ENCODE measurements at regions of chr16 and their contacts with region 1.

Region 1: DNA sequence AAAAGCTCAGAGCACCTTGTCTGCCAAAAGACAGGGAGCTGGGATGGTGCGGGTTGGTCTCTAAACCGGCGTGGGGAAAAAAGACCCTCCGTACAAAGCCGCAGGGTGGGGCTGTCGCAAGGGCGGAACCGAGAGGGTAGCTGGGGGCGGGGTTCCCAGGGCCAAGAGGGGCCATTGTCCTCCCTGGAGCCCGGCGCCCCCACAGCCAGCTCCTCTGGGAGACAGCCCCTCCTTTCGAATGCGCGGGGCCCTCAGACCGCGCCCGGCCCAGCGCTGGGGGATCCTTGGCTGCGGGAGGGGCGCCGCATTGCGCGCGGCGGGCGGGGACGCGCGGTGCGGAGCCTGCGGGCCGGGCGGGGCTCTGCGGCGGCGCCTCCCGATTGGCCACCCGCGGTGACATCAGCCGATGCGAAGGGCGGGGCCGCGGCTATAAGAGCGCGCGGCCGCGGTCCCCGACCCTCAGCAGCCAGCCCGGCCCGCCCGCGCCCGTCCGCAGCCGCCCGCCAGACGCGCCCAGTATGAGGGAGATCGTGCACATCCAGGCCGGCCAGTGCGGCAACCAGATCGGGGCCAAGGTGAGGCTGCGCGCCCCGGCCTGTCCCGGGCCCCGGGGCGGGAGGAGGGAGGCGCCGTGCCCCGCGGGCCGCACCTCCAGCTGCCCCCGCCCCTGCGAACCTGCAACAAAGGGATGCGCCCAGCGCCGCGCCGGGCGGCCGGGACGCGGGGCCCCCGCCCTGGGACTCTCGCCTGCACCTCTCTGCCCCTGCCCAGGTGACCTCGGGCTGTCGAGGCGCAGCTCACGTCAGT is at the start of gene TUBB3:
- DNase-seq: peak; percentile 95
- H3K27ac ChIP-seq: peak within 1 kb of the TSS; percentile 100
- CTCF ChIP-seq: no peak

Region 2: GRCh38 chr16:89855421-89855871 is 67.6 kb before region 1 on chr16:
- CTCF ChIA-PET with region 1: no interaction called
- POLR2A ChIA-PET with region 1: no interaction called
- DNase-seq: no peak
- H3K27ac ChIP-seq: no peak overlapping the region
- CTCF ChIP-seq: no peak

Region 3: GRCh38 chr16:89906139-89907028 is 16.7 kb before region 1 on chr16:
- CTCF ChIA-PET with region 1: interaction called, 8 read pairs
- POLR2A ChIA-PET with region 1: interaction called, 16 read pairs
- DNase-seq: no peak
- H3K27ac ChIP-seq: peak overlapping the region; percentile 36
- CTCF ChIP-seq: no peak

Region 4: DNA sequence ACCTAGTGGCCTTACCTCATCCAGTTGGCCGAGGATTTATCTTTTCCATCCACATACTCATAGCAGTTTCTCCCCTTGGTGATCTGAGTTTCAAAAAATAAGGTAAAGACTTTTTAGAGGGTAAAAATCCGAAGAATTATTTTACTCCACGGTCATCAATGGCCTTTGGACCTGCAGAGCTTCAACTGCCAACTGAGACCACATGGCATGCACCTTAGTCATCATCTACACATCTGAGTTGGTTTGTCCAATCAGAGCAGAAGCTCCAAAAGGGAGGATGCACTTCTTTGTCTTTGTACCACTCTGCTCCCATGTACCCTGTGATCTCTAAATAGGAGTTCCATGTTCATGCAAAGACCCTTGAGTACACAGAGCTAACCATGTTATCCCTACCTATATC is 138.3 kb after region 1 on chr16:
- CTCF ChIA-PET with region 1: no interaction called
- POLR2A ChIA-PET with region 1: no interaction called
- DNase-seq: no peak
- H3K27ac ChIP-seq: no peak overlapping the region
- CTCF ChIP-seq: no peak